Endothelial cell of umbilical vein (primary cell): ENCODE measurements at regions of chr1 and their contacts with region 1.

Region 1: DNA sequence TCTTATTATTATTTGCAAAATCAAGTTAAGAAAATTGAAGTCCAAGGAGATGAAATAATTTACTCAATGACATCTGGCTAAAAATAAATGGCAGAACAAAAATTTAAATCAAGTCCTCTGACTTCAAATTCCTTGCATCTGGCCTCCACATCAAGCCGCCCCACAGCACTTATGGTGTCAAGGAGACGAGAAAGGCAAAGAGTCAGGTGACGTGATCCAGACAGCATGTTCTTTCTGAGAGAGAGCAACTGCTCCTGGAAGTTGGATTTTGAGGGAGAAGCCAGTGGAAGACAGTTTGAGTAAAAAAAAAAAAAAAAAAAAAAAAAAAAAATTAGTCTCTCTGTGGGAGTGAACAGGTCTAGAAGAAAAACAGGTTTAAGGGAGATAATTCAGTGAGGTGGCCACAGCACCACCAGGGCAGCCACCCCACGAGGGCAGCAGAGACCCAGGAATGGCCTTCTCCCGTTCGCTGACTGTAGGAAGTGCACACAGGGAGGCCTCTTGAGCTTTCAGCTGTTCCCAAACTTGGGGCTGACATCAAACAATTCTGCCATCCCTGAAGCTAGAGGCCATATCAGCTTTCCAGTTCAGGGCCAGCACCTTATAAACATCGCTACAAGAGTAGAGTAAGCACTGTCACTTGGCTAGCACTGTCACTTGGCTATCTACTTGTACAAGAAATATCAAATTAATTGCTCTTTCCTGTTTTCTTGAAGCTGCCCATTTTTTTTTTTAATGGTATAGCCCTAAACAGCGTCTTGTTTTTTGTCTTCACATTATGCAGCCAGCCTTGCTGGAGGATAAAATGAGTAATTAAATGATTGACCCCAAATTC is 7.8 kb downstream of the C1orf162 start:
- DNase-seq: peak; percentile 62
- H3K4me3 ChIP-seq: no peak overlapping the region
- H3K27ac ChIP-seq: no peak overlapping the region
- H3K4me1 ChIP-seq: no peaks in the 10 kb centered on the region
- H3K27me3 ChIP-seq: peaks cover 0 to 2% of the 10 kb centered on the region in 2 experiments
- CTCF ChIP-seq: peak; percentile 57 to 70
- POLR2A ChIP-seq: no peak

Region 2: GRCh38 chr1:110118636-110119615 is 1362.7 kb before region 1 on chr1:
- CTCF ChIA-PET with region 1: no interaction called
- POLR2A ChIA-PET with region 1: no interaction called
- dilution Hi-C with region 1: no loop called
- intact Hi-C with region 1: no loop called
- DNase-seq: no peak
- H3K4me3 ChIP-seq: no peak overlapping the region
- H3K27ac ChIP-seq: no peak overlapping the region
- H3K4me1 ChIP-seq: no peaks in the 10 kb centered on the region
- H3K27me3 ChIP-seq: peaks cover 6 to 15% of the 10 kb centered on the region in 2 experiments
- CTCF ChIP-seq: no peak
- POLR2A ChIP-seq: no peak

Region 3: GRCh38 chr1:111354584-111354983 is 127.0 kb before region 1 on chr1:
- CTCF ChIA-PET with region 1: no interaction called
- POLR2A ChIA-PET with region 1: no interaction called
- dilution Hi-C with region 1: no loop called
- intact Hi-C with region 1: no loop called
- DNase-seq: no peak
- H3K4me3 ChIP-seq: no peak overlapping the region
- H3K27ac ChIP-seq: no peak overlapping the region
- H3K4me1 ChIP-seq: no peaks in the 10 kb centered on the region
- H3K27me3 ChIP-seq: peaks cover 0 to 3% of the 10 kb centered on the region in 2 experiments
- CTCF ChIP-seq: no peak
- POLR2A ChIP-seq: no peak

Region 4: DNA sequence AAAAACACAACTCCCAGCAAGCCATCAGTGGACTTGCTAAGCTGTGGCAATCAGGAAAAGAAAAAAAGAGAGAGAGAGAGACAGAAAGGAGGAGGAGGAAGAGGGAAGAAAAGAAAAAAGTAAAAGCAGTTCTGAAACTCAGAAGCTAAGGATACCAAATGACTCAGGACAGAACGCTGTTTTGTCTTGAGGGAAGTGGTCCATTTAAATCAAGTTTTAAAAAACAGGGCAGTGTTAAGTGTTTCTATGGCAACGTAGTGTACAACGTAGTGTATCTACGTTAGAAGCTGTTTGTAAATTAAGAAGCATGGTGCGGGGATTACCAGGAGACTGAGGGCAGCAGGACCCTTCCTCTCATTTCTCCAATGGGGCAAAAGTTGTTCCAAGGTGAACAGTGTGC is 16.0 kb after region 1 on chr1:
- CTCF ChIA-PET with region 1: interaction called, 28 read pairs
- POLR2A ChIA-PET with region 1: no interaction called
- dilution Hi-C with region 1: no loop called
- intact Hi-C with region 1: no loop called
- DNase-seq: no peak
- H3K4me3 ChIP-seq: no peak overlapping the region
- H3K27ac ChIP-seq: no peak overlapping the region
- H3K4me1 ChIP-seq: no peaks in the 10 kb centered on the region
- H3K27me3 ChIP-seq: peaks cover 18 to 29% of the 10 kb centered on the region in 2 experiments
- CTCF ChIP-seq: no peak
- POLR2A ChIP-seq: no peak

Region 5: GRCh38 chr1:111709986-111710385 is 228.4 kb after region 1 on chr1:
- CTCF ChIA-PET with region 1: interaction called, 66 read pairs
- POLR2A ChIA-PET with region 1: no interaction called
- dilution Hi-C with region 1: no loop called
- intact Hi-C with region 1: loop called (anchors 1 kb)
- DNase-seq: no peak
- H3K4me3 ChIP-seq: no peak overlapping the region
- H3K27ac ChIP-seq: no peak overlapping the region
- H3K4me1 ChIP-seq: no peaks in the 10 kb centered on the region
- H3K27me3 ChIP-seq: no peaks in the 10 kb centered on the region
- CTCF ChIP-seq: no peak
- POLR2A ChIP-seq: no peak

Region 6: GRCh38 chr1:111755331-111756123 is 273.9 kb after region 1 on chr1 and contains the start of gene DDX20:
- CTCF ChIA-PET with region 1: interaction called, 10 read pairs
- POLR2A ChIA-PET with region 1: no interaction called
- dilution Hi-C with region 1: no loop called
- intact Hi-C with region 1: loop called (anchors 2 kb)
- DNase-seq: peak; percentile 96
- H3K4me3 ChIP-seq: peak within 1 kb of the TSS; percentile 80 to 91 (median 82)
- H3K27ac ChIP-seq: peak within 1 kb of the TSS; percentile 90
- H3K4me1 ChIP-seq: peaks cover 24% of the 10 kb centered on the region
- H3K27me3 ChIP-seq: no peaks in the 10 kb centered on the region
- CTCF ChIP-seq: peak; percentile 82 to 83
- POLR2A ChIP-seq: peak; percentile 95
- total RNA-seq, gene DDX20: 14.5 and 15.9 TPM in 2 replicates

Region 7: GRCh38 chr1:111813521-111814304 is 332.1 kb after region 1 on chr1:
- CTCF ChIA-PET with region 1: interaction called, 17 read pairs
- POLR2A ChIA-PET with region 1: no interaction called
- dilution Hi-C with region 1: no loop called
- intact Hi-C with region 1: no loop called
- DNase-seq: no peak
- H3K4me3 ChIP-seq: no peak overlapping the region
- H3K27ac ChIP-seq: no peak overlapping the region
- H3K4me1 ChIP-seq: no peaks in the 10 kb centered on the region
- H3K27me3 ChIP-seq: peaks cover 0 to 2% of the 10 kb centered on the region in 2 experiments
- CTCF ChIP-seq: peak in 1 of 2 donors; percentile 3
- POLR2A ChIP-seq: no peak

Region 8: DNA sequence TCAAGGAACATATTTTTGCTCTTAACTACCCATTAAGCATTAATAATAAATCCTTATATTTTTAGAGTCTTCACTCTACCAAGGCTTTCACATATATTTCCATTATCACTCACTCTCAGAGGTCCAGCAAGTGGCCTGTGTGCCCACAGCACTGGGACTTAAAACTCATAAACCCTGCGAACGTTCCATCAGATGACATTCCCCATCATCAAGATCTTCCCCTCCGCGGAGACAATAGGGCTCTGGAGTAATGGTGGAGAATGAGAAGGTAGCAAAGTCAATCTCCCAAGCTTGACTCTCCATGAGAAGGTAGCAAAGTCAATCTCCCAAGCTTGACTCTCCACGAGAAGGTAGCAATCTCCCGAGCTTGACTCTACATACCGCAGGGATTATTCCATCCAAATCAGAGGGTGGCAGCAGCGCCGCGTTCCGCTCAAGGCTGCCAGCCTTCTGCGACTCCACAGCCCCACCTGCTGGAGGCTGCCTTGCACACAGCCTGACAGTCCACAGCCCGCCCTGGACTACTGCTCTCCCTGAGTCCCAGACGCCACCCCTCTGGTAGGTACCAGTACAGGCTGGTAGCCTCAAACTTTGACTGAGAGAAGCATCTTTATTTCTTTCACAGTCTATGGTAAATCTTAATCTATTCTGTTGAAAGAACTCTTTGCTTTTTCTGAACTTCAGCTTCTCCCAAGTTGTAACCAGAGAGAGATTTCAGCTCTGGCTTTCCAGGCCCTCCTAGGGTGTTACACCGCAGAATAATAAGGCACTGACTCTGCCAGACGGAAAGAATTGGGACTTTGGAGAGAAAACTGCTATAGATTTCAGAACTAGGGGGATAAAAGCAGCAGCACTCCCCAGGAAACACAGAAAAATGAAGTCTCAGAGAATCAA is 888.0 kb after region 1 on chr1:
- CTCF ChIA-PET with region 1: interaction called, 9 read pairs
- POLR2A ChIA-PET with region 1: no interaction called
- dilution Hi-C with region 1: no loop called
- intact Hi-C with region 1: loop called (anchors 5 kb)
- DNase-seq: peak; percentile 87
- H3K4me3 ChIP-seq: no peak overlapping the region
- H3K27ac ChIP-seq: no peak overlapping the region
- H3K4me1 ChIP-seq: no peaks in the 10 kb centered on the region
- H3K27me3 ChIP-seq: peaks cover 10 to 12% of the 10 kb centered on the region in 2 experiments
- CTCF ChIP-seq: peak; percentile 98 to 99
- POLR2A ChIP-seq: no peak